Common myeloid progenitor, CD34-positive (primary cell): ENCODE measurements at regions of chr1 and their contacts with region 1.

Region 1: DNA sequence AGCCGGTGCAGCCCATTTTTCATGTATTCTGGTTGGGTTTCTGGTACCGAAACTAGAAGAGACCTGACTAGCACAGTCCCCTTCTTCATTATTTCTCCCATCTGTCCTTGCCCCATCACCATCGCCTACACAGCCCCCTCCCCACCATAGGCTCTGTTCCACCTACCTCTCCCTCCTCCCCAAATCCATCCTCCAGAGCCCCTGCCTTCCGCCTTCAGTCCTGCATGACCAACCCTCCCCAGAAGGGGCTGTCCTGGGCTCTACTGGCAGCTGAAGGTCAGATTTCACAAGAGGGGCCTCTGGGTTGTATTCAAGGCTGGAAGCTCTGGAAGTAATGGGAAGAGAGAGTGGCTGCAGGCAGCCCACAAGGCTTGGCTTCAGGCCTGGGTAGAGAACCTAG is 55.2 kb downstream of the SDC3 start:
- DNase-seq: no peak
- H3K4me3 ChIP-seq: no peak overlapping the region
- H3K27ac ChIP-seq: no peak overlapping the region
- H3K4me1 ChIP-seq: peaks cover 0 to 4% (median 3%) of the 10 kb centered on the region in 4 experiments
- H3K27me3 ChIP-seq: peaks cover 6 to 78% (median 39%) of the 10 kb centered on the region in 5 experiments

Region 2: GRCh38 chr1:30632481-30632880 is 220.9 kb before region 1 on chr1:
- CTCF ChIA-PET with region 1: no interaction called
- POLR2A ChIA-PET with region 1: no interaction called
- DNase-seq: no peak
- H3K4me3 ChIP-seq: no peak overlapping the region
- H3K27ac ChIP-seq: no peak overlapping the region
- H3K4me1 ChIP-seq: no peaks in the 10 kb centered on the region
- H3K27me3 ChIP-seq: peaks cover 0 to 7% (median 0%) of the 10 kb centered on the region in 5 experiments

Region 3: GRCh38 chr1:30866594-30866993 is 13.2 kb after region 1 on chr1:
- CTCF ChIA-PET with region 1: interaction called, 11 read pairs
- POLR2A ChIA-PET with region 1: no interaction called
- DNase-seq: no peak
- H3K4me3 ChIP-seq: no peak overlapping the region
- H3K27ac ChIP-seq: no peak overlapping the region
- H3K4me1 ChIP-seq: peaks cover 0 to 3% (median 1%) of the 10 kb centered on the region in 4 experiments
- H3K27me3 ChIP-seq: peaks cover 6 to 86% (median 10%) of the 10 kb centered on the region in 5 experiments

Region 4: DNA sequence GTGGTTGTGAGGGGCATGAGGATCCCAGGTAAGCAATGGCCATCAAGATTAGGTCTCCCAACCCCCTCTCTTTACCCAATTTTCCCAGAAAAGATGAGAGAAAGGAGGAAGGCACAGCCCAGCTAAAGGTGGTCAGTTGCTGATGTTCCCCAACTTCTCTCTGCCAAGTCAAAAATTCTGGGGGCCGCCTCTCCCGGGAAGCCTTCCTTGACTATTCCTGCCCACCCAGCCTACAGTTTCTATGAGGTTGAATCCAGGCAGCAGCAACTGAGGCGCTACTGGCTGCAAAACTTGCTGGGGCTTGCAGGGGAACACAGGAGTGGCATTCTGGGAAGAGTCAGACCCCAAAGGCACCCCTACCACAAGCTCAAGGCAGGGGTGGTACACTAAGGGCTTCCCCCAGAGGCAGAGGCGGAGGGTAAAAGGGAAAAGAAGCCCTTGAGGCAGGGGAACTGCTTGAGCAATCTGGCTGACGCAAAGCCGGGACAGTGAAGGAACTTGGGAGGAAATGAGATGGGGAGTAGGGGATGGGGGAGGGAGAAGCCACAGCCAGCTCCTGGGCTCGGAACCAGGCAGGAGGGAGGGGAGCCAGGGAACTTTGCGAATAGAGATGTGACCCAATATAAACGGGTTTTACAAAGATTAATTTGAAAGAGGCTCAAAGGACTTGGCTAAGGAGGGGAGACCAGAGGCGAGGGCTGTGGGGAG is 24.0 kb after region 1 on chr1:
- CTCF ChIA-PET with region 1: no interaction called
- POLR2A ChIA-PET with region 1: no interaction called
- DNase-seq: peak in 2 of 3 donors; percentile 23 to 25
- H3K4me3 ChIP-seq: no peak overlapping the region
- H3K27ac ChIP-seq: no peak overlapping the region
- H3K4me1 ChIP-seq: peaks cover 0 to 7% (median 0%) of the 10 kb centered on the region in 4 experiments
- H3K27me3 ChIP-seq: peaks cover 0 to 99% (median 44%) of the 10 kb centered on the region in 5 experiments